ENCODE measurements at regions of chr16 and their contacts with region 1.

Region 1: DNA sequence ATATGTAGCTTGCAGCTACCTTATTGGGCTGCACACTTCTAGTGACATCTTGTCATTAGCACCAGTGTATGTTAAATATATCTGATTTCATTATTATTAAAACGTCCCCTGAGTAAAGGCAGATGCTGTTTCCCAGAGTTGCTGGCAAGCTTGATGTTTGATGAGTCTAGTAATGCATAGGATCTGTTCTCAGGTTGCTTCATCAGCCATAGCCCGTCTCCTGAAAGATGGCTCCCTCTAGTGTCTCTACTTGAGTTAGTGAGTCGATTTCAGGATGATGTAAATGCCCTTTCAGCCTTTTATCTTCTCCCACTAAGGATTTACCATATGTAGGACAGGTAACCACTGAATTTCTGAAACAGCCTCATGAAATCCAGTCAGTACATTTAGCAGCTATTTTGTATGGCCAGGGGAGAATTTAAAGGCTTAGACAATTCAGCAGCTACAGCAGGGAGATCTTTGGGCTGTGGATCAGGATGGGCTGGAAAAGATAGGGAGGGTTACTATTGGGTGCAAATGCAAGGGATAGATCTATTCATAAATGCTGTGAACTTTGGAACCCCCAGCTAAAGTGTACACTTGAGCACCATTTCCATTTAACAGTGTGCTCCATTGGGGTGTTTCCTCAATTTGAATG is 376.3 kb downstream of the CNTNAP4 start:
- DNase-seq: peak; percentile 79
- H3K4me3 Mint-ChIP-seq: no peak overlapping the region
- H3K27ac Mint-ChIP-seq: no peak overlapping the region
- H3K4me1 Mint-ChIP-seq: peaks cover 11% of the 10 kb centered on the region
- H3K27me3 Mint-ChIP-seq: no peaks in the 10 kb centered on the region
- CTCF ChIP-seq: peak; percentile 77

Region 2: DNA sequence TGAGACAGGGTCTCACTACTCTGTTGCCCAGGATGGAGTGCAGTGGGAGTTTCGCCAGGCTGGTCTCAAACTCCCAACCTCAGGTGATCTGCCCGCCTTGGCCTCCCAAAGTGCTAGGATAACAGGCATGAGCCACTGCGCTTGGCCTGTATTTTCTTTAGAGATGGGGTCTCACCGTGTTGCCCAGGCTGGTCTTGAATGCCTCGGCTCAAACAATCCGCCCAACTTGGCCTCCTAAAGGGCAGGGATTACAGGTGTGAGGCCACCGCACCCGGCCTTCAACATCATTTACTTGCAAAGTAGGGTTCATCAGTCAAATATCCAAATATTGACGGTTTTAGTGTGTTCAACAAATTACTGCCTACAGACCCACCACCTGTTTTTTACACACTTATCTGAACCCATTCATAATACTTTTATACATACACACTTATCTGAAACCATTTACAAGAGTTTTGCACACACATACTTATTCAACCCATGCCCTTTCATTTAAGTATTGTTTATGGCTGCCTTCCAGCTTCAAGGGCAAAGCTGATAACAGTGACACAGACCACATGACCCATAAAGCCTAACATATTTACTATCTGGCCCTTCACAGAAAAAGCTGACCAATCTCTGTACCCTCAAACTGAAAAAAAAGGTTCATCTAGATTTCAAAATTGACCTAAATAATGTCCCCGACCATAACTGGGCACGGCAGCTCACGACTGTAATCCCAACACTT is 1200.9 kb before region 1 on chr16:
- CTCF ChIA-PET with region 1: no interaction called
- POLR2A ChIA-PET with region 1: no interaction called
- intact Hi-C with region 1: no loop called
- DNase-seq: no peak
- H3K4me3 Mint-ChIP-seq: no peak overlapping the region
- H3K27ac Mint-ChIP-seq: no peak overlapping the region
- H3K4me1 Mint-ChIP-seq: peaks cover 4% of the 10 kb centered on the region
- H3K27me3 Mint-ChIP-seq: no peaks in the 10 kb centered on the region
- CTCF ChIP-seq: no peak

Region 3: DNA sequence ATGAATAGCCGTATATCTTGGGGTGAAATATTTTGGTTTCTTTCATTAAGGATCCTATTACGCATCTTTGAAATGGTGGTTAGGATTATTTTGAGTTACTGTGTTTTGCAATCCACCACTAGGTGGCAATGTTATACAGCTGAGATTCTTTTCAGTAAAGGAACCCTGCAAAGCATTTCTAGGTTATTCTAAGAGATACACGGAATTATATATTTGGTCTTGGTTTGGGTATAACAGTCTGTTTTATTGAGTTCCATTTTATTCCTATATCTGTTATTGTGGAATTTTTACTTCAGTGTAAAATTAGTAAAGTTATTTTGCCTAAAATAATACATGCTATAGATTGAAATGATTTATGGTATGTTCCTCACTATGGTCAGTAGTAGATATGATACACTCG is 864.3 kb before region 1 on chr16:
- CTCF ChIA-PET with region 1: interaction called, 8 read pairs
- POLR2A ChIA-PET with region 1: no interaction called
- intact Hi-C with region 1: loop called (anchors 1 kb)
- DNase-seq: peak; percentile 69
- H3K4me3 Mint-ChIP-seq: no peak overlapping the region
- H3K27ac Mint-ChIP-seq: no peak overlapping the region
- H3K4me1 Mint-ChIP-seq: no peaks in the 10 kb centered on the region
- H3K27me3 Mint-ChIP-seq: no peaks in the 10 kb centered on the region
- CTCF ChIP-seq: peak; percentile 67

Region 4: DNA sequence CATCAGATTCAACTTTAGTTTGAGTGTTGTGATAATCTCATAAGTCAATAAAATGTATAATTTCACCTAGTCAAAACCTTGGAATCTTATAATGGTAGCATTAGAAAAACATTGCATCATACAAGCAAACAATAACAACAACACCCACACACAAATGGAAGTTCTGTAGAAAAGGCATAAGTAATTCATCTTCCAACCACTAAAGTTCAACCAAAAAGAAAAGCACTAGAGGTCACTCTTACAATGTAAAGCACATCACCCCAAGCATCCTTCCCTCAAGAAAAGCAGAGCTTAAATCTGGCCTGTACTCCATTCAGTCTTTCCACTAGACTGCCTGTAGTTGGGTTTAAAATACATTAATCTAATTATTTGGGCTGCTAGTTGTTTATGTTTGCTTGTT is 374.5 kb before region 1 on chr16:
- CTCF ChIA-PET with region 1: interaction called, 78 read pairs
- POLR2A ChIA-PET with region 1: no interaction called
- intact Hi-C with region 1: loop called (anchors 1 kb)
- DNase-seq: peak; percentile 53
- H3K4me3 Mint-ChIP-seq: no peak overlapping the region
- H3K27ac Mint-ChIP-seq: no peak overlapping the region
- H3K4me1 Mint-ChIP-seq: peaks cover 9% of the 10 kb centered on the region
- H3K27me3 Mint-ChIP-seq: peaks cover 15% of the 10 kb centered on the region
- CTCF ChIP-seq: peak; percentile 47

Region 5: GRCh38 chr16:76668207-76668725 is 14.8 kb after region 1 on chr16:
- CTCF ChIA-PET with region 1: interaction called, 24 read pairs
- POLR2A ChIA-PET with region 1: interaction called, 3 read pairs
- intact Hi-C with region 1: no loop called
- DNase-seq: no peak
- H3K4me3 Mint-ChIP-seq: no peak overlapping the region
- H3K27ac Mint-ChIP-seq: no peak overlapping the region
- H3K4me1 Mint-ChIP-seq: no peaks in the 10 kb centered on the region
- H3K27me3 Mint-ChIP-seq: no peaks in the 10 kb centered on the region
- CTCF ChIP-seq: no peak

Region 6: GRCh38 chr16:77043076-77043475 is 389.6 kb after region 1 on chr16:
- CTCF ChIA-PET with region 1: interaction called, 26 read pairs
- POLR2A ChIA-PET with region 1: no interaction called
- intact Hi-C with region 1: loop called (anchors 1 kb)
- DNase-seq: peak; percentile 54
- H3K4me3 Mint-ChIP-seq: no peak overlapping the region
- H3K27ac Mint-ChIP-seq: no peak overlapping the region
- H3K4me1 Mint-ChIP-seq: no peaks in the 10 kb centered on the region
- H3K27me3 Mint-ChIP-seq: no peaks in the 10 kb centered on the region
- CTCF ChIP-seq: peak; percentile 36

Measured in MCF 10A (cell line).